Endothelial cell of umbilical vein (primary cell): ENCODE measurements at regions of chr4 and their contacts with region 1.

Region 1: DNA sequence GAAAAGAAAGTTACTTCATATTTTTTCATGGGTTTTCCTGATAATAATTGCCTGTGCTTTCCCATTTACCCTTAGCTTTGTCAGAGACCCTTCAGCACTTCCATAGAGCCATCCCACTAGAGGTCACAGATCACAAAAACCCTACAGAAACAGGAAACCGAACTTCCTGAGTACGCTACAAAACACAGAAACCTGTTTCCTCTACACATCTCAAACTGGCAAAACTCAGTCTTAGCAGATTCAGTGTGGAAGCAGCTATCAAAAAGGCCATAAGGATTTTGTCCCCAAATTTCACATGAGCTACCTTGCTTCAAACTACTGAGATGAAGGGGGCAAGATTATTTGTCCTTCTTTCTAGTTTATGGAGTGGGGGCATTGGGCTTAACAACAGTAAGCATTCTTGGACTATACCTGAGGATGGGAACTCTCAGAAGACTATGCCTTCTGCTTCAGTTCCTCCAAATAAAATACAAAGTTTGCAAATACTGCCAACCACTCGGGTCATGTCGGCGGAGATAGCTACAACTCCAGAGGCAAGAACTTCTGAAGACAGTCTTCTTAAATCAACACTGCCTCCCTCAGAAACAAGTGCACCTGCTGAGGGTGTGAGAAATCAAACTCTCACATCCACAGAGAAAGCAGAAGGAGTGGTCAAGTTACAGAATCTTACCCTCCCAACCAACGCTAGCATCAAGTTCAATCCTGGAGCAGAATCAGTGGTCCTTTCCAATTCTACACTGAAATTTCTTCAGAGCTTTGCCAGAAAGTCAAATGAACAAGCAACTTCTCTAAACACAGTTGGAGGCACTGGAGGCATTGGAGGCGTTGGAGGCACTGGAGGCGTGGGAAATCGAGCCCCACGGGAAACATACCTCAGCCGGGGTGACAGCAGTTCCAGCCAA is at the start of gene MMRN1:
- DNase-seq: peak; percentile 95
- H3K4me3 ChIP-seq: peak within 1 kb of the TSS; percentile 83 to 100 (median 97)
- H3K27ac ChIP-seq: peak within 1 kb of the TSS; percentile 92
- H3K4me1 ChIP-seq: peaks cover 40% of the 10 kb centered on the region
- H3K27me3 ChIP-seq: no peaks in the 10 kb centered on the region
- CTCF ChIP-seq: no peak
- POLR2A ChIP-seq: peak; percentile 90
- total RNA-seq, gene MMRN1: 318 and 414 TPM in 2 replicates

Region 2: GRCh38 chr4:89226665-89227574 is 668.0 kb before region 1 on chr4:
- CTCF ChIA-PET with region 1: interaction called, 3 read pairs
- POLR2A ChIA-PET with region 1: no interaction called
- dilution Hi-C with region 1: no loop called
- intact Hi-C with region 1: loop called (anchors 1 kb)
- DNase-seq: peak; percentile 79
- H3K4me3 ChIP-seq: no peak overlapping the region
- H3K27ac ChIP-seq: no peak overlapping the region
- H3K4me1 ChIP-seq: peaks cover 2% of the 10 kb centered on the region
- H3K27me3 ChIP-seq: no peaks in the 10 kb centered on the region
- CTCF ChIP-seq: peak; percentile 70 to 75
- POLR2A ChIP-seq: no peak

Region 3: GRCh38 chr4:89549907-89550306 is 345.0 kb before region 1 on chr4:
- CTCF ChIA-PET with region 1: no interaction called
- POLR2A ChIA-PET with region 1: interaction called, 3 read pairs
- dilution Hi-C with region 1: no loop called
- intact Hi-C with region 1: loop called (anchors 2 kb)
- DNase-seq: peak; percentile 97
- H3K4me3 ChIP-seq: no peak overlapping the region
- H3K27ac ChIP-seq: peak overlapping the region; percentile 81
- H3K4me1 ChIP-seq: peaks cover 23% of the 10 kb centered on the region
- H3K27me3 ChIP-seq: no peaks in the 10 kb centered on the region
- CTCF ChIP-seq: no peak
- POLR2A ChIP-seq: no peak

Region 4: DNA sequence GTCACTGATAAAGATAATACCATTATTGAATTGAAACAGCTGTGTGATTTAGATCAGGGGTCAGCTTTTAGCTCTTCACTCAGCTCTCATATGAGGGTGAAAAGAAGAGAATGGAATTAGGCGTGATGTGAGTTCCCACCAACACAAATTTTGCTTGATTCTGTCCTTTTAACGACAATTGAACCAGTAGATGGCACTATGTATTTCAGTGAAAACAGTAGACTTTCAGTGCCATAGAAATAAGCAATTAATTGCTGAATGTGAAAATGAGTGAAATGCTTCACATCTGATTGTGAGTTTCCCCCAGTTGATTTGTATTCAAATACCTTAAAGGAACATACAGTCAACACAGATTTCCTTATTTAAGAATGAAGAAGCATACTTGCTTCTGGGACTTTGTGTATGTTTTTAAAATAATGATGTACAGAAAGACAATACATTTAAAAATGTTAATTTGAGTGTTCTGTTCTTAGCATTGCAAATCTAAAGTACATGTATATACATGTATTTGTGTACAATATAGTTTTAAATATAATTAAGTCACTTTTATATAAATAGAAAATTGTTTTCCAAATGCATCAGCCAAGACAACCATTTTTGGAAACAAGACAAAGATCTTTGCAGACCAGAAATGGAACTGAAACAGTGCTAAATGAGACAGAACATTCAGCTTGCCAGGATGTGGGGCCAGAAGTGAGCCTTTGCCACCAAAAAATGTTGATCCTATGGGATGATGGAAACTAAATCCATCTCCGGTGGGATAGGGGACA is 236.8 kb before region 1 on chr4:
- CTCF ChIA-PET with region 1: interaction called, 15 read pairs
- POLR2A ChIA-PET with region 1: no interaction called
- dilution Hi-C with region 1: no loop called
- intact Hi-C with region 1: no loop called
- DNase-seq: peak; percentile 82
- H3K4me3 ChIP-seq: no peak overlapping the region
- H3K27ac ChIP-seq: no peak overlapping the region
- H3K4me1 ChIP-seq: peaks cover 9% of the 10 kb centered on the region
- H3K27me3 ChIP-seq: no peaks in the 10 kb centered on the region
- CTCF ChIP-seq: peak; percentile 29 to 34
- POLR2A ChIP-seq: no peak

Region 5: DNA sequence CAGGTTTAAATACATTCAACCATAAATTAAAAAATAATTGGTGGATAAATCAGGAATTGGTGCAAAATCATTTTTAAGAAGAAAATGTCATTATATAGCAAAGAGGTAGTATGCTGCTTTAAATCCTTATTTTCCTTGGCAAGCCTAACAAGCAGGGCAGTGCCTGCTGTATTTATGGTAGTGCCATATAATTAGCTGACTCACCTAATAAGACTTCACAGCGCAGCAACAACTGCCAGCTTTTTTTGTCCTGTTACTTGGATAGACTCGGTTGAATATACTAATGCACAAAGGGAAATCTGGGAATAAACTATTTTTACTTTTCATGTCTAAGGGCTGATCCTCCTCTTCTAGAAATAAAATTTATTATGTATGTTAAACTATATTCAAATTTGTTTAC is 157.0 kb before region 1 on chr4:
- CTCF ChIA-PET with region 1: no interaction called
- POLR2A ChIA-PET with region 1: no interaction called
- dilution Hi-C with region 1: no loop called
- intact Hi-C with region 1: no loop called
- DNase-seq: peak; percentile 79
- H3K4me3 ChIP-seq: no peak overlapping the region
- H3K27ac ChIP-seq: no peak overlapping the region
- H3K4me1 ChIP-seq: peaks cover 7% of the 10 kb centered on the region
- H3K27me3 ChIP-seq: no peaks in the 10 kb centered on the region
- CTCF ChIP-seq: no peak
- POLR2A ChIP-seq: no peak

Region 6: DNA sequence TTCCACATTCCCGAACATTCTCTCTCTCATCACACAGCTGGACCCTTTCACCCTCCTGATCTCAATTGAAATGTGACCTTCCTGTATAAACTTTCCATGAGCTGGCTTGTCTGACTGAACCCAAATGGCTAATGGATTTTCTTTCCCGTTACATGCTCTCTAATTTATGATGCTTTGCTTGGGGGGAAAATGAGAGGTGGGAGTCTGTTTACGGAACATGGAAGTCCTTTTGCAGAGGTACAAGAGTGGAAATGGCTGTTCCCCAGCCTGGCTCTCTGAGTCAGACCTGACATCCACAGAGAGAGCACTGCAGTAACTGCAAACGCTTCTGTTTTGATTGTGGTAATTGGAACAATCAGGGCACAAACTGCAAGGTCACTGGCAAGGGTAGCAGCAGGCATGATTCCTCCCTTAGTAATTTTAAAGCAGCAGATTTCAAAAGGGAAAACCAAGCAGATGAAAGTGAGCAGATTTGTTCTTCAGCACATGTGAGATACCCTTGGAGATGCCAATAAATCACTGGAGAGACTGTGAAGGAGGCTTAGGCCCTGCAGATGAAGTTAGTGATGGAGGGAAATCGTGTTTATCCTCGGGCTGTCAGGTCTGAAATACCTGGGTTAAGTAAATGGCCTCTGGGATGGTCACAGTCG is 141.8 kb before region 1 on chr4:
- CTCF ChIA-PET with region 1: no interaction called
- POLR2A ChIA-PET with region 1: interaction called, 3 read pairs
- dilution Hi-C with region 1: no loop called
- intact Hi-C with region 1: loop called (anchors 1 kb)
- DNase-seq: peak; percentile 91
- H3K4me3 ChIP-seq: peak overlapping the region in 1 of 3 experiments; percentile 54
- H3K27ac ChIP-seq: peak overlapping the region; percentile 99
- H3K4me1 ChIP-seq: peaks cover 27% of the 10 kb centered on the region
- H3K27me3 ChIP-seq: no peaks in the 10 kb centered on the region
- CTCF ChIP-seq: no peak
- POLR2A ChIP-seq: no peak

Region 7: GRCh38 chr4:89836897-89837384 is 58.0 kb before region 1 on chr4 and contains the start of gene SNCA:
- CTCF ChIA-PET with region 1: interaction called, 5 read pairs
- POLR2A ChIA-PET with region 1: no interaction called
- dilution Hi-C with region 1: no loop called
- intact Hi-C with region 1: loop called (anchors 2 kb)
- DNase-seq: peak; percentile 89
- H3K4me3 ChIP-seq: peak within 1 kb of the TSS; percentile 56 to 93 (median 91)
- H3K27ac ChIP-seq: peak within 1 kb of the TSS; percentile 62
- H3K4me1 ChIP-seq: peaks cover 21% of the 10 kb centered on the region
- H3K27me3 ChIP-seq: no peaks in the 10 kb centered on the region
- CTCF ChIP-seq: no peak
- POLR2A ChIP-seq: peak; percentile 78
- total RNA-seq, gene SNCA: 116 and 124 TPM in 2 replicates

Region 8: DNA sequence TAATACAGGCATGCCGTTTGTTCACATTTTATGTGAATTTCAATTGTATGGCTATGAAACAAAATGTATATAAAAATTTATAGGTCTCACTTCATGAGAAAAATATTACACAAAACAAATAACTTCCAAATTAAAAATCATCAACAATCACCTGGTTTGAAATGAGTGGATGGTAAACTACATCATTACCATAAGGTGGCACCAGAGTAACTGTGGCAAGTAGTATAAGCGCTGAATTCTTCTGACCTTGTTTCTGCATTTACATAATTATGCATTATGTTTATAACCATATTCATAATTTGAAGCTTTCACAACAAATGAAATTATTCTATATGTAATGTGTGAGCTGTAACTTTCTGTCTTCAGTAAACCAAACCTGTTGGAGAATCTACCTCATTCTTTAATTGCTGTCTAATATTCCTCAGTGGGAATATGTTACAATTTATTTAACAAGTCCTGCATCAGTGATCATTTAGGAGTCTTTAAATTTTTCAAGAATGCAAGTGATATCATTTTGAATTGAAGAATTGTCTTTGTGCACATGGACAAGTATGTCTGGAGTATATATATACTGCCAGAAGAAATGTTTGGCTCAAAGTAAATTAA is 55.0 kb after region 1 on chr4:
- CTCF ChIA-PET with region 1: no interaction called
- POLR2A ChIA-PET with region 1: no interaction called
- dilution Hi-C with region 1: no loop called
- intact Hi-C with region 1: no loop called
- DNase-seq: no peak
- H3K4me3 ChIP-seq: no peak overlapping the region
- H3K27ac ChIP-seq: no peak overlapping the region
- H3K4me1 ChIP-seq: no peaks in the 10 kb centered on the region
- H3K27me3 ChIP-seq: no peaks in the 10 kb centered on the region
- CTCF ChIP-seq: no peak
- POLR2A ChIP-seq: no peak

Region 9: GRCh38 chr4:90357117-90357710 is 462.3 kb after region 1 on chr4:
- CTCF ChIA-PET with region 1: no interaction called
- POLR2A ChIA-PET with region 1: no interaction called
- dilution Hi-C with region 1: no loop called
- intact Hi-C with region 1: no loop called
- DNase-seq: peak; percentile 71
- H3K4me3 ChIP-seq: no peak overlapping the region
- H3K27ac ChIP-seq: no peak overlapping the region
- H3K4me1 ChIP-seq: no peaks in the 10 kb centered on the region
- H3K27me3 ChIP-seq: no peaks in the 10 kb centered on the region
- CTCF ChIP-seq: peak; percentile 44 to 52
- POLR2A ChIP-seq: no peak